Activated T-helper 1 cell treated with anti-CD3 and anti-CD28 coated beads, Interleukin-12 subunit alpha, Interleukin-12 subunit beta, Interleukin-2, Interleukin-4 antibody, amounts not matched to agents 30 ng/mL and 10 ng/mL and 1 ng/mL, durations not matched to agents 14 hours and 24 hours and 36 hours (primary cell): ENCODE measurements at regions of chr2 and their contacts with region 1.

Region 1: DNA sequence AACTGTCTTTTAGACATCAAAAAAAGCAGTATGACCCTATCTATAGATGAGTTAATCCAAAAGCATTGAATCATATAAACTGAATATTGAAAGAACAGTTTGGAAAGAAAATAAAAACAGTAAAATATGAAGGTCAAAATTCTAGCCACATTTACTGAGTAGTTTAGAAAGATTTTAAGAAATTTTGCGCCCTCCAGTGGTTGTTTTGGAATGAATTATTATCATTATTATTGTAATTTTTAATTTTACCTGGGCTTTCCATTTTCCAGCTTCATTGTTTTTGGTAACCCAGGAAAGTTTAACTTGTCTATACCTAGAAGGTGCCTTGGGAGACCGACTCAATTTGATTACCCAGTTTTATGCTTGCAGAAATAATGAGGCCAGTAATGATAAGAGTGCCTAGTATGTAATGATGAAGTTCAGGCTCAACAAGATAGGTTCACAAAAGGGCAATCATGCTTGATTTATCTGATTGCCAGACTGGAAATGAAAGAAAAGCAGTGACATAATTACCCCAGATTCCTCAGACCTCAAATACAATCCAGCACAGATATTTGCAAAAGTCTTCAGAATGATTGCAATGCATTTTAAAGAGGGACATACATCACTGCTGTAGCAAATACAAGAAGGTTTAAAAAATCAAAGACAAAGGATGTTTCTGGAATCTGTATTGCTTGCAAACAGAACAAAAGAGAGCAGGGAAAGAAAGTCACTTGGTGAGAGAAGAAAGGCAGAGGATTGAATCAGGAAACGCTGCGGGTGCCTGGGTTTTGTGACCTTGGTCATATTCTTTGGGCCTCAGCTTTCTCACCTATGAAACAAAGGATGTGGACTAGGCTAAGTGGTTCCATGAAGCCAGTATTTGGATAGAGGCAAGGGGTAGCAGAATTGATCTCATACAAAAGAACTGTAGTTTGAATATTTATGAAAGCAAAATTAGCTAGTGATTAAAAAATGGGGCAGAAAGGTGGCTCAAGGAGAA is 153.8 kb downstream of the MAP2 start:
- DNase-seq: no peak
- H3K4me3 Mint-ChIP-seq: no peak overlapping the region
- H3K27ac Mint-ChIP-seq: no peak overlapping the region
- H3K4me1 Mint-ChIP-seq: no peaks in the 10 kb centered on the region
- H3K27me3 Mint-ChIP-seq: peaks cover 5% of the 10 kb centered on the region

Region 2: DNA sequence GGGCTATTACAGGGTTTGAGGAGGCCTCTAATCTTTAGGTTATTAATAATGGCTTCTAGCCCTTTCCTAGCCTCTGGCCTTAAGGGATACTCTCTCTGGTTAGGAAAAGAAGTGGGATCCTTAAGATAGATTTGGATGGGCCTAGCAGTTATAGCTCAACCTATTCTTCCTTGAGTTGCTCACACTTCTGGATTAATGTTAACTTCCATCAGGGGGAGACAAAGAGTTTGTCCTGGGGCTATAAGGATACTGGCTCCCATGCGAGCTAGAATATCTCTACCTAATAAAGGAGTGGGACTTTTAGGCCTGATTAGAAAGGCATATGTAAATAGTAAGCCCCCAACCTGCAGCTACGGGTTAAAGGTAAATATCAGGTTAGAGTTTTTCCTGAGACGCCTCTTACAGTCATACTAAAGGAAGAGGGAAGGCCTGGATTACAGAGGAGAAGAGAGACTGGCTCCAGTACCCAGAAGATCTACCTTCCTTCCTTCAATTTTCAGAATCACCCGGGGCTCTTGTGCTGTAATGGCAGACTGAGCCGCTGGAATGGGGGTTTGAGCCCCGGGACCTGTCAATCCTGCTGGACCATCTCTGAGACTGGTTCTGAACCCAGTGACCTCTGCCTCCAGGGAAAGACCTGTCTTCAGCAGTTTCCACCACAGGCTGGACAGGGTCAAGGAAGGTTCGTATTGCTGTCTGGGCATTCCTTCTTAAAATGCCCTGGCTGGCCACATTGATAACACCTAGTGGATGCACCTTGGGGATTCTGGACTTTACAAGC is 1185.2 kb before region 1 on chr2:
- intact Hi-C with region 1: loop called (anchors 1 kb)
- DNase-seq: no peak
- H3K4me3 Mint-ChIP-seq: no peak overlapping the region
- H3K27ac Mint-ChIP-seq: no peak overlapping the region
- H3K4me1 Mint-ChIP-seq: peaks cover 5% of the 10 kb centered on the region
- H3K27me3 Mint-ChIP-seq: peaks cover 10% of the 10 kb centered on the region

Region 3: DNA sequence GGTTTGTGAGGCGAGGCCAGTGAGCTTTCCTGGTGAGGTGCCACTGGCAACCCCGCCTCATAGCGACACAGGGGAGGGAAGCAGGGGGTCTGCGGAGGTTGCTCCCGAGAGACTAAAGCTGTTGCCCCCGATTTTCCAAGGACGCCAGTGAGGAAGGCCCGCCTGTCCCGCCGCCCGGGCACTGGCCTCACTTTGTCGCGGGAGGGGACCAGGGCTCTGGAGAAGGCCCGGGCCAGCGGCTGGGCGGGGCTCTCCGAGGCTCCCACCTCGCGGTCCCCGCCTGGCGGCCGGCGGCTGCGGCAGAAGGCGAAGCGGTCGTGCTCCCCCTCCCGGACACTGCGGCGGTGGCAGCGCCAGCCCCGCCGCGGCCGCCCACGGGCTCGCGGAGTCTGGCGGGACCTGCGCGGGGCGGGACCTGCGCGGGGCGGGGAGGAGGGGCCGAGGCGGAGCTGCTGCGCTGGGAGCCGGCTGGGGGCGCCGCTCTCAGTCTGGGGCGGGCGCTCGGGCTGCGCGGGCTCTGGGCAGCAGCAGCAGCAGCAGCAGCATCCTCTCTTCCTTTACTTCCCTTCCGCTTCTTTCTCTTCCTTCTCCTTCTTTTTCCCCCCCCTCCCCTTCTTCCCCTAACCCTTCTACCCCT is 154.0 kb before region 1 on chr2 and contains the start of gene MAP2:
- intact Hi-C with region 1: loop called (anchors 2 kb)
- DNase-seq: peak; percentile 63
- H3K4me3 Mint-ChIP-seq: peak within 1 kb of the TSS; percentile 76
- H3K27ac Mint-ChIP-seq: no peak within 1 kb of the TSS
- H3K4me1 Mint-ChIP-seq: peaks cover 14% of the 10 kb centered on the region
- H3K27me3 Mint-ChIP-seq: peaks cover 20% of the 10 kb centered on the region
- total RNA-seq, gene MAP2: not detected in 2 replicates

Region 4: DNA sequence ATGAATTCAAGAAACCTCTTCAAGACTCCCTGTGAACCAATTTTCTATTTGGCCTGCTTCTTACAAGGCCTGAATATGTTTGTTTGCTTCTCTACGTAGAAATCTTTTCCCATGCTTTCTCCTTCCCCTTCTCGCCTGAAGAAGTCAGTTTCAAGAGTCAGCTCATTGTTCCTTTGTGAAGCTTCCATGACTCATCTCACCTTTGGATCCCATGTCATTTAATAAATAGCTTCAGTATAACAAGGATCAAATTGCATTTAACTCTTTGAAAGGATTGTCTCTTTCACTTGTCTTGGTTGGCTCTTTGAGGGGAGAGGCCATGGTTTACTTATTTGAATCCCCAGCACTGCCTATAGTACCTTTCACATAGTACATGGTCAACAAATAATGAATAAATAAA is 1007.2 kb after region 1 on chr2:
- intact Hi-C with region 1: no loop called
- DNase-seq: no peak
- H3K4me3 Mint-ChIP-seq: no peak overlapping the region
- H3K27ac Mint-ChIP-seq: no peak overlapping the region
- H3K4me1 Mint-ChIP-seq: no peaks in the 10 kb centered on the region
- H3K27me3 Mint-ChIP-seq: peaks cover 2% of the 10 kb centered on the region